ENCODE measurements at regions of chr14 and their contacts with region 1.

Region 1: GRCh38 chr14:68426661-68427549 is 366.0 kb downstream of the ZFP36L1 start:
- DNase-seq: no peak
- H3K4me3 ChIP-seq: no peak overlapping the region
- H3K4me3 Mint-ChIP-seq: no peak overlapping the region
- H3K27ac Mint-ChIP-seq: no peak overlapping the region
- H3K4me1 ChIP-seq: peaks cover 8% of the 10 kb centered on the region; the same call in 1 of the 2 replicates
- H3K4me1 Mint-ChIP-seq: peaks cover 6% of the 10 kb centered on the region
- H3K27me3 ChIP-seq: no peaks in the 10 kb centered on the region
- H3K27me3 Mint-ChIP-seq: no peaks in the 10 kb centered on the region
- CTCF ChIP-seq: no peak

Region 2: DNA sequence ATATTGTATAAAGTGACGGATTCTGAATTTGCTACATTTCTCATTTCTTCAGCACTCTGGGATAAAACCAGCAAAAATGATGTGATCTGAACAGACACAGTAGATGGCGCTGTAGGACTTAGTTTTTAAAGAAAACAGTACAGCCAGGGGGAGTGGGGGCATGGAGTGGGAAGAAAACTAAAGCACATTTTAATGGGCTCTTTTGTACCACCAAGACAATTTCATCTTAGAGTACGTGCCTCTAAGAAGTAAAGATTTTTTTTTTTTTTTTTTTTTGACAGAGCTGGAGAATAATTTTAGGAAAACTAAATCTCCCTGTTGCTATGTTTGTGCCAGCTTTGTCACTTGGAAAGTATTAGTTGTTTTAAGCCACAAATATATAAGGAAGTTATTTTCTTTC is 483.0 kb before region 1 on chr14:
- CTCF ChIA-PET with region 1: no interaction called
- POLR2A ChIA-PET with region 1: no interaction called
- intact Hi-C with region 1: loop called (anchors 5 kb)
- DNase-seq: peak; percentile 74 to 75
- H3K4me3 ChIP-seq: no peak overlapping the region
- H3K4me3 Mint-ChIP-seq: no peak overlapping the region
- H3K27ac Mint-ChIP-seq: no peak overlapping the region
- H3K4me1 ChIP-seq: peaks cover 23% of the 10 kb centered on the region
- H3K4me1 Mint-ChIP-seq: peaks cover 27% of the 10 kb centered on the region
- H3K27me3 ChIP-seq: no peaks in the 10 kb centered on the region
- H3K27me3 Mint-ChIP-seq: no peaks in the 10 kb centered on the region
- CTCF ChIP-seq: peak; percentile 62 to 77

Region 3: DNA sequence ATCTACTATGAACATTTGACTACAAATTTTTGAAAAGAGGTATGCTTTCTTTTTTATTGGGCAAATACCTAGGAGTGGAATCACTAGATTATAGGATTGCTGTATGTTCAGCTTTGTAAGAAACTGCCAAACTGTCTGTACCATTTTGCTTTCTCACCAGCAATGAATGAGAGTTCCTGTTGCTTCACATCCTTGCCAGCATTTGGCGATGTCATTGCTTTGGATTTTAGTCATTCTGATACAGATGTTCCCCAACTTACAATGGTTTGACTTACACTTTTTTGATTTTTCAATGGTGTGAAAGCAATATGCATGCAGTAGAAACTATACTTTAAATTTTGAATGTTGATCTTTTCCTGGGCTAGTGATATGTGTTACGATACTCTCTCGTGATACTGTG is 278.6 kb before region 1 on chr14:
- CTCF ChIA-PET with region 1: no interaction called
- POLR2A ChIA-PET with region 1: interaction called, 10 read pairs
- intact Hi-C with region 1: no loop called
- DNase-seq: no peak
- H3K4me3 ChIP-seq: no peak overlapping the region
- H3K4me3 Mint-ChIP-seq: no peak overlapping the region
- H3K27ac Mint-ChIP-seq: no peak overlapping the region
- H3K4me1 ChIP-seq: peaks cover 10% of the 10 kb centered on the region; the same call in 1 of the 2 replicates
- H3K4me1 Mint-ChIP-seq: peaks cover 13% of the 10 kb centered on the region
- H3K27me3 ChIP-seq: no peaks in the 10 kb centered on the region
- H3K27me3 Mint-ChIP-seq: no peaks in the 10 kb centered on the region
- CTCF ChIP-seq: no peak

Measured in Caco-2 (cell line).